ENCODE measurements at regions of chr21 and their contacts with region 1.

Region 1: GRCh38 chr21:45747802-45748445 is 104.4 kb downstream of the PCBP3 start:
- DNase-seq: no peak
- ATAC-seq: peak in 2 of 8 donors; percentile 57 to 60
- H3K4me3 ChIP-seq: no peak overlapping the region
- H3K27ac ChIP-seq: no peak overlapping the region
- H3K4me1 ChIP-seq: no peaks in the 10 kb centered on the region
- H3K27me3 ChIP-seq: no peaks in the 10 kb centered on the region
- CTCF ChIP-seq: no peak

Region 2: DNA sequence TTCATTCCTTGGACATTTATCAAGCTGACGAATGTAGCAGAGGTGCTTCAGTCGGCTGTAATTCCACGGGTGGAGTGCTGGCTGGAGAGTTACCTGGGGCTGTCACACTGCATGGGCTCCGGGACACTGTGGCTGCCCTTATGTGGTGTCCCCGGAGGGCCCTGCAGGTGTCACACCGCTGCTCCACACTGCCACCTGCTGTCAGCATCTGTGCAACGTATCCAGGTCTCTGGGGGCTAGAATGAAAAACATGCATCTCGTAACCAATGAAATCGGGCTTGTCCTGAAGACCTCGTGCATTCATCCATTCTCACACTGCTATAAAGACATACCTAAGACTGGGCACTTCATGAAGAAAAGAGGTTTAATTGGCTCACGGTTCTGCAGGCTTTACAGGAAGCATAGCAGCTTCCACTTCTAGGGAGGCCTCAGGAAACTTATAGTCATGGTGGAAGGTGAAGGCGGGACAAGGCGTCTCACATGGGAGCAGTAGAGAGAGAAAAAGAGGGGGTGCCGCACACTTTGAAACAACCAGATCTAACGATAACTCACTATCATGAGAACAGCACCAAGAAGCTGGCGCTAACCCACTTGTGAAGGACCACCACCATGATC is 151.1 kb before region 1 on chr21:
- intact Hi-C with region 1: no loop called
- DNase-seq: peak; percentile 64 to 73
- ATAC-seq: peak; percentile 68 to 85 (median 78)
- H3K4me3 ChIP-seq: no peak overlapping the region
- H3K27ac ChIP-seq: no peak overlapping the region
- H3K4me1 ChIP-seq: peaks cover 0 to 6% (median 0%) of the 10 kb centered on the region in 9 donors
- H3K27me3 ChIP-seq: peaks cover 0 to 43% (median 18%) of the 10 kb centered on the region in 7 donors
- CTCF ChIP-seq: peak; percentile 52 to 90 (median 79)

Region 3: DNA sequence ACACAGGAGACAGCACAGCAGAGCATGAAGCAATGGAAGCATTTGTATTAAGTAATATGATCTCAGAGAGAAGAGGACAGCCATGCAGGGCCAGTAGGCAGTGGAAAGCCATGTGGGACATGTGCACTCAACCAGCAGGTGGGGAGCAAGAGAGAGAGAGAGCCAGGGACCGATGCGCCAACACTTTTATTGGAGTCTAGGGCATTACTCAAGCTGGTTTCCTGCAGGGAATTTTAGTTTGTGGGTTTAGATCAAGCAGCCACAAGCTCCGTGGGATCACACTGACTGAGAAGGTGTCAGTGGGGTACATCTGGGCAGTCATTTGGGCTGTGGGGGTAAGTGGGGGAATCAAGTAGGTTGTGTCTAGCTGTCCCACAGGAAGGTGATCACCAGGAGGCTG is 32.7 kb after region 1 on chr21:
- intact Hi-C with region 1: loop called in 1 of 10 experiments (anchors 5 kb)
- DNase-seq: no peak
- ATAC-seq: no peak
- H3K4me3 ChIP-seq: no peak overlapping the region
- H3K27ac ChIP-seq: no peak overlapping the region
- H3K4me1 ChIP-seq: no peaks in the 10 kb centered on the region
- H3K27me3 ChIP-seq: peaks cover 0 to 3% (median 0%) of the 10 kb centered on the region in 7 donors
- CTCF ChIP-seq: no peak

Region 4: GRCh38 chr21:45836268-45836655 is 88.3 kb after region 1 on chr21:
- intact Hi-C with region 1: no loop called
- DNase-seq: no peak
- ATAC-seq: no peak
- H3K4me3 ChIP-seq: no peak overlapping the region
- H3K27ac ChIP-seq: no peak overlapping the region
- H3K4me1 ChIP-seq: peaks cover 0 to 15% (median 9%) of the 10 kb centered on the region in 9 donors
- H3K27me3 ChIP-seq: no peaks in the 10 kb centered on the region
- CTCF ChIP-seq: no peak

Region 5: GRCh38 chr21:45910543-45911221 is 162.8 kb after region 1 on chr21:
- intact Hi-C with region 1: no loop called
- DNase-seq: no peak
- ATAC-seq: peak in 1 of 8 donors; percentile 38
- H3K4me3 ChIP-seq: no peak overlapping the region
- H3K27ac ChIP-seq: no peak overlapping the region
- H3K4me1 ChIP-seq: peaks cover 0 to 5% (median 0%) of the 10 kb centered on the region in 9 donors
- H3K27me3 ChIP-seq: peaks cover 0 to 3% (median 0%) of the 10 kb centered on the region in 7 donors
- CTCF ChIP-seq: no peak